ENCODE measurements at regions of chr9 and their contacts with region 1.

Region 1: GRCh38 chr9:86354011-86354817 is at the start of gene TUT7:
- DNase-seq: peak; percentile 96 to 97
- ATAC-seq: peak; percentile 98 to 99 (median 98)
- H3K4me3 ChIP-seq: peak within 1 kb of the TSS; percentile 57 to 96 (median 90)
- H3K27ac ChIP-seq: peak within 1 kb of the TSS; percentile 59 to 99 (median 96)
- H3K4me1 ChIP-seq: peaks cover 7 to 56% (median 42%) of the 10 kb centered on the region in 9 donors
- H3K27me3 ChIP-seq: no peaks in the 10 kb centered on the region
- CTCF ChIP-seq: peak in 1 of 9 donors; percentile 3
- total RNA-seq, gene TUT7: 11.0 to 16.7 (median 14.4) TPM

Region 2: DNA sequence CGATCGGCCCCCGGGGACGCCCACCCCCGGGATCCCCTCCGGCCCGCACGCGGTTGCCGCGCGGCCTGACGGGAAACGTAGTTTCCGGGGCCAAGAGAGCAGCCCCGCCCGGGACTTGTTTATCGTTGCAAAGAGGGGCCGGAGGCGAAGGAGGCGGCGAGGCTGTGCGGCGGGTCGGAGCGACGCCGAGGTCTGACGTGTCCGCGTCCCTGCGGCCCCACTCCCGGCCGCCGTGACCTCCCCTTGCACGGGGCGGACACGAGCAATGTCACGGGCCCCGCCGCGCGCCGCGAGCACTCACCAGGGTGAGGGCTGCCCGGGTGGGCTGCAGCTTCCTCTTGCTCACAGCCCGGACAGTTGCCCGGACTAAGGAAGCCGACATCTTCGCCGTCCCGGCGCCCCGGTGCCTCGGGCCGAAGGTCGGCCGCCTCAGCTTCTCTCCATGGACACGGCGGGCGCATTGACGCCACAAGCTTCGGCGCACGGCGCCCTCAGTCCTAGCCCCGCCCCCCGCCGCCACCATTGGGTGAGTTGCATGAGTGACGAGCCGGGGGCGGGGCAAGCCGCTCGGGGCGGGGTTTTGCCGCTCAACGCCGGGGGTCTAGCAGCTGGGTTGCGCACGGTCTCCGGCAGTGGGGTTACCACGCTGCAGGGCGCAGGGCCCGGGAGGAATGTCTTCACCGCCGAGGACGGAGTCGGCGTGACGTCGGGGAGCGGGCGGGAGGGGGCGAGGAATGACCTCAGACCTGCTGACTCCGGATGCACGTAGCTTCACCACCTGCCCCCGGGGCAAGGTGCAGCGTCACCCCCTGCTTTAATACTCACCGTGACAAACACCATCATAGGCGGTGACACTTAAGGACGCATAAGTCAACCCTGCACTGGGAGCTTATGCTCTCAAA is 71.9 kb before region 1 on chr9 and contains the start of gene ISCA1:
- intact Hi-C with region 1: loop called in 2 of 10 experiments (anchors 5 kb)
- DNase-seq: peak; percentile 98
- ATAC-seq: peak; percentile 96 to 98 (median 98)
- H3K4me3 ChIP-seq: peak within 1 kb of the TSS; percentile 60 to 96 (median 82)
- H3K27ac ChIP-seq: peak within 1 kb of the TSS; percentile 89 to 99 (median 97)
- H3K4me1 ChIP-seq: peaks cover 6 to 48% (median 38%) of the 10 kb centered on the region in 9 donors
- H3K27me3 ChIP-seq: no peaks in the 10 kb centered on the region
- CTCF ChIP-seq: no peak
- total RNA-seq, gene ISCA1: 50.7 to 86.1 (median 71.7) TPM